ENCODE measurements at regions of chr15 and their contacts with region 1.

Region 1: GRCh38 chr15:43510200-43511011 is 7.0 kb upstream of the MAP1A start:
- DNase-seq: peak; percentile 97
- ATAC-seq: peak; percentile 94
- H3K4me3 Mint-ChIP-seq: peak overlapping the region; percentile 90
- H3K27ac Mint-ChIP-seq: peak overlapping the region; percentile 89
- H3K4me1 Mint-ChIP-seq: peaks cover 27% of the 10 kb centered on the region
- H3K27me3 Mint-ChIP-seq: peaks cover 4% of the 10 kb centered on the region
- CTCF ChIP-seq: peak; percentile 34

Region 2: DNA sequence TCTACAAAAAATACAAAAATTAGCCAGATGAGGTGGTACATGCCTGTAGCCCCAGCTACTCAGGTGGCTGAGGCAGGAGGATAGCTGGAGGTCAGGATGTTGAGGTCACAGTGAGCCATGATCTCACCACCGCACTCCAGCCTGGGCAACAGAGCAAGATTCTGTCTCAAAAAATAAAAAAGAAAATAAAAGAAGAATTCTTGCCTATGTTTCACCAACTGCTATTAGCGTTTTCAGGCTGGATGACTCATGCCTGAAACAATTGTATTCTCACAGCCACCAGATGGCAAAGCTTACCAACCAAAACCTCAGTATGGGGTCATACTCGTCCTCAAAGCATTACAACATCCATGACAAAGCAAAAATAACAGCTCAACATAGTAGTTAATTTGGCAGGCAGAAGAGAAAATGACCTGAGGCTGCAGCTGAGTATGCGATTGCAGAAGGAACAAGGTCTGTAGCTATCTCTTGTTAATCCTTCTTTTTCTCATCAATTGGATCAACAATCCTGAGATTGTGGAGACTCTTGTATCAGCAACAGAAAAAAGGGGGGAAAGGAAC is 69.6 kb before region 1 on chr15:
- CTCF ChIA-PET with region 1: interaction called, 66 read pairs
- POLR2A ChIA-PET with region 1: interaction called, 4 read pairs
- intact Hi-C with region 1: no loop called
- DNase-seq: peak; percentile 63
- ATAC-seq: peak; percentile 95
- H3K4me3 Mint-ChIP-seq: peak overlapping the region; percentile 5
- H3K27ac Mint-ChIP-seq: peak overlapping the region; percentile 89
- H3K4me1 Mint-ChIP-seq: peaks cover 10% of the 10 kb centered on the region
- H3K27me3 Mint-ChIP-seq: no peaks in the 10 kb centered on the region
- CTCF ChIP-seq: peak; percentile 65

Region 3: GRCh38 chr15:43492673-43493601 is 17.5 kb before region 1 on chr15 and contains the start of gene TP53BP1:
- CTCF ChIA-PET with region 1: interaction called, 15 read pairs
- POLR2A ChIA-PET with region 1: interaction called, 15 read pairs
- intact Hi-C with region 1: no loop called
- DNase-seq: peak; percentile 99
- ATAC-seq: peak; percentile 100
- H3K4me3 Mint-ChIP-seq: peak within 1 kb of the TSS; percentile 88
- H3K27ac Mint-ChIP-seq: peak within 1 kb of the TSS; percentile 96
- H3K4me1 Mint-ChIP-seq: peaks cover 29% of the 10 kb centered on the region
- H3K27me3 Mint-ChIP-seq: no peaks in the 10 kb centered on the region
- CTCF ChIP-seq: no peak
- total RNA-seq, gene TP53BP1: 20.6 to 23.0 TPM

Region 4: GRCh38 chr15:43499635-43500034 is 10.8 kb before region 1 on chr15:
- CTCF ChIA-PET with region 1: interaction called, 15 read pairs
- POLR2A ChIA-PET with region 1: interaction called, 15 read pairs
- intact Hi-C with region 1: no loop called
- DNase-seq: no peak
- ATAC-seq: no peak
- H3K4me3 Mint-ChIP-seq: no peak overlapping the region
- H3K27ac Mint-ChIP-seq: no peak overlapping the region
- H3K4me1 Mint-ChIP-seq: no peaks in the 10 kb centered on the region
- H3K27me3 Mint-ChIP-seq: no peaks in the 10 kb centered on the region
- CTCF ChIP-seq: no peak

Region 5: GRCh38 chr15:43524254-43524845 is 13.9 kb after region 1 on chr15:
- CTCF ChIA-PET with region 1: interaction called, 22 read pairs
- POLR2A ChIA-PET with region 1: interaction called, 3 read pairs
- intact Hi-C with region 1: no loop called
- DNase-seq: no peak
- ATAC-seq: no peak
- H3K4me3 Mint-ChIP-seq: no peak overlapping the region
- H3K27ac Mint-ChIP-seq: no peak overlapping the region
- H3K4me1 Mint-ChIP-seq: peaks cover 7% of the 10 kb centered on the region
- H3K27me3 Mint-ChIP-seq: peaks cover 5% of the 10 kb centered on the region
- CTCF ChIP-seq: no peak

Region 6: DNA sequence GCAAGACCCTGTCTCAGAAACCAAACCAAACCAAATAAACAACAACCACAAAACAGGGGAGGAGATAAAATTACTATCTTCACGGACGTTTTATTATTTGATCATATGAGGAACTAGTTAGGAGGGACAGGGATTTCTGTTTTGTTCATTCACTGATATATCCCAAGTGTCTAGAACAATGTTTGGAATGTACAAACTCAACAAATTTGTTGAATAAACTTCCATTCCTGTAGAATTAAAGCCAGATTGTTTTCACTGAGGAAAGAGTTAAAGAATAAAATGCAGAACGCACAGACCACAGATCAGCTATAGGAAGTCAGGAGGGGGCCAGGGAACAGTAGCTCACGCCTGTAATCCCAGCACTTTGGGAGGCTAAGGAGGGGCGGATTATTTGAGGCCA is 114.7 kb after region 1 on chr15:
- CTCF ChIA-PET with region 1: no interaction called
- POLR2A ChIA-PET with region 1: no interaction called
- intact Hi-C with region 1: no loop called
- DNase-seq: no peak
- ATAC-seq: no peak
- H3K4me3 Mint-ChIP-seq: no peak overlapping the region
- H3K27ac Mint-ChIP-seq: no peak overlapping the region
- H3K4me1 Mint-ChIP-seq: no peaks in the 10 kb centered on the region
- H3K27me3 Mint-ChIP-seq: peaks cover 6% of the 10 kb centered on the region
- CTCF ChIP-seq: no peak